Activated B cell treated with CpG ODN at 0.5 μM for 24 hours (primary cell): ENCODE measurements at regions of chr9 and their contacts with region 1.

Region 1: GRCh38 chr9:71911253-71912074 is at the start of gene C9orf85:
- DNase-seq: peak; percentile 89
- ATAC-seq: peak; percentile 91
- H3K4me3 Mint-ChIP-seq: peak within 1 kb of the TSS; percentile 100
- H3K27ac Mint-ChIP-seq: peak within 1 kb of the TSS; percentile 98
- H3K4me1 Mint-ChIP-seq: peaks cover 67% of the 10 kb centered on the region
- H3K27me3 Mint-ChIP-seq: no peaks in the 10 kb centered on the region
- CTCF ChIP-seq: no peak
- total RNA-seq, gene C9orf85: 9.5 and 9.8 TPM in 2 replicates

Region 2: DNA sequence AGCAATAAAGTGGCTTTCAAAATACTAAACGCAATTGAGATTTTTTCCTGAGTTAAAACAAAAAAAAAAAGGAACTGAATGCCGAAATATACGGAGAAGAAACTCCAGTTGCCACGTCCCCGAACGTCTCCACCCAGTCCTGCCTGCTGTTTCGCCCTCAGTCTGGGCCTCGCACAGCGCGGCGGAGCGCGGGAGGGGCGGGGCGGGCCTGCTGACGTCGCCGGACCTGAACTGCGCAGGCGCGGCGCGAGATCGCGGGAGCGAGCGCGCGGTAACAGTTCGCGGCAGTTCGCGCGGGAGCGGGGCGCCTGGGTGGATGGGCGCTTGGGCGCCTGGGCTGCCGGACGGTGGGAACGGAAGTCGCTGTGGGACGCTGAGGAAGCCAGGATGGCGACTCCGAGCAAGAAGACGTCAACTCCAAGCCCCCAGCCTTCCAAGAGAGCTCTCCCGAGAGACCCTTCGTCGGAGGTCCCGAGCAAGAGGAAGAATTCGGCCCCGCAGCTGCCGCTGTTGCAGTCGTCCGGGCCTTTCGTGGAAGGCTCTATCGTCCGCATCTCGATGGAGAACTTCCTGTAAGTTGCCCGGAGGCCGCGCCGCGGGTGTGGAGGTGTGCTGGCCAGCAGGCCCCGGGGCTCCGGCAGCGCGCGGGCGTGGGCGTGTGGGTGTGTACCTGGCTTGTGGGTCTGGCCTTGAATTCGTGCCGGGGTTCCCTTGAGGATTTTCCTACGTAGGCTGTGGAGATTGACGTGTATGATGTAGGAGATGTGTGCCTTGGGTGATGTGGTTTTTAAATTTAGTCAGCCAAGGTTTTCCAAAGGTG is 1652.6 kb before region 1 on chr9 and contains the start of gene SMC5:
- CTCF ChIA-PET with region 1: no interaction called
- POLR2A ChIA-PET with region 1: no interaction called
- intact Hi-C with region 1: loop called (anchors 2 kb)
- DNase-seq: peak; percentile 90
- ATAC-seq: peak; percentile 82
- H3K4me3 Mint-ChIP-seq: peak within 1 kb of the TSS; percentile 93
- H3K27ac Mint-ChIP-seq: peak within 1 kb of the TSS; percentile 99
- H3K4me1 Mint-ChIP-seq: peaks cover 52% of the 10 kb centered on the region
- H3K27me3 Mint-ChIP-seq: no peaks in the 10 kb centered on the region
- CTCF ChIP-seq: no peak
- total RNA-seq, gene SMC5: 46.9 and 49.3 TPM in 2 replicates

Region 3: DNA sequence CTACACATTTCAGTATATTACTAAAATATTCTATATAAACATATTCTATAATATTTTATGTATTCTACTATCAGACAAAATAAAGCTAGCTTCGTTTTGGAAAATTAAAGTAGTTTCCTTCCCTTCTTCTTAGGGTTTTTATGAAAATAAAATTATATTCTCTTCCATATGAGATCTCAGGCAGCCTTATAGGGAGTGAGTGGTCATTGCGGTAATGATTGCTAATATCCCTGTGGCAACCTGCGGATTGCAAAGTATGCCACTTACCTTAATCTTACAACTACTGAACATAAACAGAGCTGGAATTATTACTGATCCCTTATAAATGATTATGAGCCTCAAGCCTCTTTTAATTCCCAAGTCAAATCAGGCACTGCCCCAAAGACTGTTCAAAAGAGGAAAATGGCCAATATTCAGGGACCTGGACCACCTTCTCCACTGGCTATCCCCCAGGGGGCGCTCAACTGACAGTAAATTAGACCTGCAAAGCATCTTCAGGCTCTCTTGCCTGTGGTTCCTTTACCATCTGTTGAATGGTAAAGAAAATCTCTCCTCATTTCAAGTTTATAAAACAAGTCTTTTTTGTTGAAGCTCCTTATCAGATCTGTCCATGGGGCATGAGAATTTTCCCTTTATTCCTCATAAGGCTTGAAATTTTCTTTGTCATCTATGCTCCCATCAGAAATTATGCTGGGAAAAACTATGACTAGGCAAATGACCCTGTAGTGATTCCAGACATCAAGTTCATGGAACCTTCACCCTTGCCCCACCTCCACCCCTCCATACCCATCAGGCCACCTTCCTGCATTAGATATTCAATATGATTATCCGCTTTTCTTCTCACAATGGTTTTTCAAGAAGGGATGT is 307.0 kb before region 1 on chr9:
- CTCF ChIA-PET with region 1: no interaction called
- POLR2A ChIA-PET with region 1: no interaction called
- intact Hi-C with region 1: loop called (anchors 2 kb)
- DNase-seq: peak; percentile 46
- ATAC-seq: peak; percentile 78
- H3K4me3 Mint-ChIP-seq: no peak overlapping the region
- H3K27ac Mint-ChIP-seq: no peak overlapping the region
- H3K4me1 Mint-ChIP-seq: peaks cover 4% of the 10 kb centered on the region
- H3K27me3 Mint-ChIP-seq: no peaks in the 10 kb centered on the region
- CTCF ChIP-seq: peak; percentile 59

Region 4: GRCh38 chr9:71806901-71807307 is 104.6 kb before region 1 on chr9:
- CTCF ChIA-PET with region 1: interaction called, 5 read pairs
- POLR2A ChIA-PET with region 1: interaction called, 4 read pairs
- intact Hi-C with region 1: loop called (anchors 2 kb)
- DNase-seq: no peak
- ATAC-seq: peak; percentile 96
- H3K4me3 Mint-ChIP-seq: no peak overlapping the region
- H3K27ac Mint-ChIP-seq: peak overlapping the region; percentile 57
- H3K4me1 Mint-ChIP-seq: peaks cover 16% of the 10 kb centered on the region
- H3K27me3 Mint-ChIP-seq: no peaks in the 10 kb centered on the region
- CTCF ChIP-seq: peak; percentile 21

Region 5: DNA sequence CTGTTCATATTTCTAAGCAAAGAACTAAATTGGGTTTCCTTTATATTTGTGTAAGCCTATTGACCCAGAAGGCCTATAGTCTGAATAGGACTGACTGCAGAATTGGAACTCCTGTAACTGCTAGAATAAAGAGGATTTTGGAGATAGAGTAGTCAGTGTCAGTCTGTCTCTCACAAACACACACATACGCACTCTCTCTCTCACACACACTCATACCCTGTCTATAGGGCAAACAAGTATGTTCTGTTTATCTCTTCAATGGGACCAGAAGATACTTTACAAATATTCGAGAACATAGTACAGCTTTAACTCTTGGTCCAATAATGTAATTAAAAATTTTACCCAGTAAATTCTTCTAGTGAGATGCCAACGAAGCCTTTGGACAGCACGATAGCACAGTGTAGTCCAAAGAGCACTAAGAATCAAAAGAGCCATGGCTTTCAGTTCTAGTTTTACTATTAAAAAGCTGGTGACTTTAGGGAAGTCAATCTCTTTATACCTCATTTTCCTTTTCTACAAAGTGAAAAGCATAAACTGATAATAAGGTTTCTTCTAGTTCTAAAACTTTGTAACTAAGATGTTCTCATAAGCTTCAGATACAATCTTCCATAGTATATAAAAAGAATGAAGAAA is 19.8 kb before region 1 on chr9:
- CTCF ChIA-PET with region 1: interaction called, 4 read pairs
- POLR2A ChIA-PET with region 1: interaction called, 18 read pairs
- intact Hi-C with region 1: no loop called
- DNase-seq: no peak
- ATAC-seq: peak; percentile 54
- H3K4me3 Mint-ChIP-seq: peak overlapping the region; percentile 17
- H3K27ac Mint-ChIP-seq: peak overlapping the region; percentile 21
- H3K4me1 Mint-ChIP-seq: peaks cover 75% of the 10 kb centered on the region
- H3K27me3 Mint-ChIP-seq: no peaks in the 10 kb centered on the region
- CTCF ChIP-seq: no peak

Region 6: GRCh38 chr9:72013292-72013760 is 101.9 kb after region 1 on chr9:
- CTCF ChIA-PET with region 1: no interaction called
- POLR2A ChIA-PET with region 1: no interaction called
- intact Hi-C with region 1: no loop called
- DNase-seq: no peak
- ATAC-seq: no peak
- H3K4me3 Mint-ChIP-seq: no peak overlapping the region
- H3K27ac Mint-ChIP-seq: no peak overlapping the region
- H3K4me1 Mint-ChIP-seq: no peaks in the 10 kb centered on the region
- H3K27me3 Mint-ChIP-seq: no peaks in the 10 kb centered on the region
- CTCF ChIP-seq: no peak

Region 7: DNA sequence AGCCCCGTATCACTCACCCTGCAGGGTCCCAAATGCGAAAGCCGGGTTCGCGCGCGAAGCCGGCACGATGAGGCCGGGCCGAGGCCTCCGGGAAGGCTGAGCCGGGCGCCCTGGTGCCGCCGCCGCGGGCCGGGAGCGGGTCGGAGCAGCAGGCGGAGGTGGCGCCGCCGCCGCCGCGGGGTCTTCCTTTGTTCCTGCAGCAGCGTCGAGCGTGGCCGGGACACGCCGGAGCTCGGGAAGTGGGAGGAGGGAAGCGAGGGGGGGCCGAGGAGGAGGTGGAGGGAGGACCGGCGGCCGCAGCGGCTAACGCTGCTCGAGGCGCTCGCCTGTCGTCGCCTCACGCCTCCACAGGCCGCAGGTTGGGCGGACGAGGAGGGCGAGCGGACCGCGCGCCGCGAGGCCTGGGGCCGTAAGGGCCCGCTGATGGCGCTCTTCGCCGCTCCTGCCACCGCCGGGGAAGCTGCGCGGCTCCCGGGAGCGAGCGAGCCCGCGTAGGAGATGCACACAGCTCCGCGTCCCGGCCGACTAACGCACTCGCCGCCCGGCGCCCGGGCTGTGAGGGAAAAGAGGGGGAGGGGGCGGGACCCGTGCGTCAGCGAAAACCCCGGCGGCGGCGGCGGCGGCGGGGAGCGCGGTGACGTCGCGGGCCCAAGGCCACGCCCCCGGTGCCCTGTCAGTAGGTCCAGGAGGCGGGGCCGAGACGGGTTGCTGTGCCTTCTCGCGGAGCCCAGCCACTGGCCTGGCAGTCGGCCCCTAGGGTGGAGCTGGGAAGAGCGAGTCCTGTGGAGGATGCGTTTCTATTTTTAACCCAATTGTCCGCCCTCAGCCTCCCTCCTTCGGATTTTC is 453.4 kb after region 1 on chr9 and contains the start of gene ZFAND5:
- CTCF ChIA-PET with region 1: no interaction called
- POLR2A ChIA-PET with region 1: interaction called, 6 read pairs
- intact Hi-C with region 1: loop called (anchors 1 kb)
- DNase-seq: peak; percentile 89
- ATAC-seq: peak; percentile 80
- H3K4me3 Mint-ChIP-seq: peak within 1 kb of the TSS; percentile 96
- H3K27ac Mint-ChIP-seq: peak within 1 kb of the TSS; percentile 98
- H3K4me1 Mint-ChIP-seq: peaks cover 40% of the 10 kb centered on the region
- H3K27me3 Mint-ChIP-seq: no peaks in the 10 kb centered on the region
- CTCF ChIP-seq: no peak
- total RNA-seq, gene ZFAND5: 79.2 and 79.5 TPM in 2 replicates